ENCODE measurements at regions of chr4 and their contacts with region 1.

Region 1: GRCh38 chr4:146124023-146124662 is 51.4 kb upstream of the LSM6 start:
- DNase-seq: peak; percentile 42
- CTCF ChIP-seq: peak; percentile 15

Region 2: DNA sequence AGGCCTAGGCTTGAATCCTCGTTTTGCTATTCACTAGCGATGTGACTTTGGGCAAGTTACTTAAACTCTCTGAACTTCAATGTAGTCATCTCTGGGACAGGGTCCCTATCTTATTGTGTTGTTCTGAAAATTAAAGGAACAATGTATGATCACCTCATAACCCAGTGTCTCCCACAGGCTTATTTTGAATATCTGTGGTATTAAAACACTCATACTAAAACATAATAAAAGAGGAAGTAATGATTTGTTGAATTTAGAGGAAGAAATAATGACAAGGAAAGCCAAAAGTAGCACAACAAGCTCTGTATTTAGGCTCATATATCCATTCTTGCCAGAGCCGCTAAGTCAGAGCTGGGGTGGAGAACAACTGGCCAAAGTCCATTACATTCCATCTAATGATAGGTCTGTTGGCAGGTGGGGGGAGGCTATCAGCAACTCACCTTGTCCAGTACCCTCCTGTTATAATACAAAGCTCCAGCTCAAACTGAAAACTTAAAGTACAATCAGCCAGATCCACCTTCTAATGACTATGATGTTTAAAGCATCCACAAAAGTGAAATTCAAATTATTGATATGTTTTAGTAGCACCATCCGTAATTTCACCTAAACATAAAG is 13.2 kb before region 1 on chr4:
- CTCF ChIA-PET with region 1: interaction called, 29 read pairs
- POLR2A ChIA-PET with region 1: no interaction called
- DNase-seq: no peak
- CTCF ChIP-seq: no peak

Region 3: GRCh38 chr4:146269228-146269653 is 145.1 kb after region 1 on chr4:
- CTCF ChIA-PET with region 1: no interaction called
- POLR2A ChIA-PET with region 1: no interaction called
- DNase-seq: no peak
- CTCF ChIP-seq: no peak